Activated B cell treated with CpG ODN at 0.5 μM for 24 hours (primary cell): ENCODE measurements at regions of chr3 and their contacts with region 1.

Region 1: GRCh38 chr3:31891974-31892373 is 89.1 kb downstream of the OSBPL10 start:
- DNase-seq: no peak
- ATAC-seq: no peak
- H3K4me3 Mint-ChIP-seq: no peak overlapping the region
- H3K27ac Mint-ChIP-seq: peak overlapping the region; percentile 13
- H3K4me1 Mint-ChIP-seq: peaks cover 86% of the 10 kb centered on the region
- H3K27me3 Mint-ChIP-seq: no peaks in the 10 kb centered on the region
- CTCF ChIP-seq: no peak

Region 2: DNA sequence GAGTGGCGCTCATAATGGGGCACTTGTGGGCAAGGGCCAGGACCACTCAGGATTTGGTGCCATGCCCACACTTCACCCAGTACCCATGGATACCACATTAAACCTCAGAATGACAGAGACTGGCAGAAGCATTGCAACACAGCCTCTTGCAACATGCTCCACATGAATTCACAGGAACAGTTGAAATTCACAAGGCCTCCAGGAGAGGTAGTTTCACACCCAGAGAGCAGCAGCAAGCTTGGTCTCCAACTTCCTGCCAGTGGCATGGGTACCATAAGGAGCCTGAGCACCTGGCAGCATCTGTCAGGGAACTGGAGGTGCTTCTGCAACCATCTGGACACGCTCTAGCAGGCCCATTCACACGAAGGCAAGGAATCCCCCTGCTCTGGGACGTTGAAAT is 12.0 kb before region 1 on chr3:
- CTCF ChIA-PET with region 1: no interaction called
- POLR2A ChIA-PET with region 1: no interaction called
- intact Hi-C with region 1: loop called (anchors 2 kb)
- DNase-seq: no peak
- ATAC-seq: peak; percentile 76
- H3K4me3 Mint-ChIP-seq: no peak overlapping the region
- H3K27ac Mint-ChIP-seq: peak overlapping the region; percentile 69
- H3K4me1 Mint-ChIP-seq: peaks cover 72% of the 10 kb centered on the region
- H3K27me3 Mint-ChIP-seq: no peaks in the 10 kb centered on the region
- CTCF ChIP-seq: no peak

Region 3: DNA sequence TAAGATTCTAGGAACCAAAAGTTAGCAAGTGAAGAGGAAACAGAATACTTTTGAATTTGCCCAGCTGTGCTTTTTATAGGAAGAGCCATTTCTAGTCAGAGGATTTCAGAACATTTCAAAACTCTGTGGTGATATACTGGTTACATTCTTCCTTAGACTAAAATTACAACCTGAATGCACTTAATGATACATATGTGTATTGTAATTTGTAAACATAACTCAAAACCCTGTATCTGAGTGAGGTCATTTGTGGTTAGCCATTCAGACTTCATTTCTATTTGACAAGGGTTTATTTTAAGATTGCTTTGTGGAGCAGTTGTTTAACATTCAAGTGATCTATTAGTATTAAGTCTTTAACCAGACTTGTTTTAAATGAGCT is 866.4 kb after region 1 on chr3:
- CTCF ChIA-PET with region 1: no interaction called
- POLR2A ChIA-PET with region 1: no interaction called
- intact Hi-C with region 1: no loop called
- DNase-seq: no peak
- ATAC-seq: no peak
- H3K4me3 Mint-ChIP-seq: no peak overlapping the region
- H3K27ac Mint-ChIP-seq: no peak overlapping the region
- H3K4me1 Mint-ChIP-seq: no peaks in the 10 kb centered on the region
- H3K27me3 Mint-ChIP-seq: no peaks in the 10 kb centered on the region
- CTCF ChIP-seq: no peak